ENCODE measurements at regions of chr3 and their contacts with region 1.

Region 1: GRCh38 chr3:147191795-147192385 is 214.5 kb downstream of the ZIC4 start:
- DNase-seq: peak; percentile 68
- H3K4me3 ChIP-seq: no peak overlapping the region
- H3K27ac ChIP-seq: no peak overlapping the region
- H3K4me1 ChIP-seq: peaks cover 16% of the 10 kb centered on the region
- H3K27me3 ChIP-seq: no peaks in the 10 kb centered on the region

Region 2: DNA sequence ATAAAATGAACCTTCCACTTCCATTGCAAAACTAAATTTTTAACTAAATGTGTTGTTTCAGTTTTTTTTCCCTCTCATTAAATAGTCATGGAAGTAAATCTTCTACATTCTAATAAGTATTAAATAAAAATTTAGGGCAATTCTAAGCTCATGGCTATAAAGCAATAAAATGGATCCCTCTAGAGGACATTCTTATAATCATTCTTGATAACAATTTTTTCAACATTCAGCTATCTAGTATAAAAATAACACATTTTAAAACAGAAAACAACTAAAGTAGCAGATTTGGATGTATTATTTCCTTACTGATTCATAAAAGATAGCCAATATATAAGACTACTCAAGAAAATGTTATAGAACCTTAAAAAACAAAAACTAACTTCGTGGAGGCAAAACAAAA is 1424.0 kb before region 1 on chr3:
- in situ Hi-C with region 1: no loop called
- DNase-seq: peak; percentile 43
- H3K4me3 ChIP-seq: no peak overlapping the region
- H3K27ac ChIP-seq: no peak overlapping the region
- H3K4me1 ChIP-seq: no peaks in the 10 kb centered on the region
- H3K27me3 ChIP-seq: no peaks in the 10 kb centered on the region

Region 3: DNA sequence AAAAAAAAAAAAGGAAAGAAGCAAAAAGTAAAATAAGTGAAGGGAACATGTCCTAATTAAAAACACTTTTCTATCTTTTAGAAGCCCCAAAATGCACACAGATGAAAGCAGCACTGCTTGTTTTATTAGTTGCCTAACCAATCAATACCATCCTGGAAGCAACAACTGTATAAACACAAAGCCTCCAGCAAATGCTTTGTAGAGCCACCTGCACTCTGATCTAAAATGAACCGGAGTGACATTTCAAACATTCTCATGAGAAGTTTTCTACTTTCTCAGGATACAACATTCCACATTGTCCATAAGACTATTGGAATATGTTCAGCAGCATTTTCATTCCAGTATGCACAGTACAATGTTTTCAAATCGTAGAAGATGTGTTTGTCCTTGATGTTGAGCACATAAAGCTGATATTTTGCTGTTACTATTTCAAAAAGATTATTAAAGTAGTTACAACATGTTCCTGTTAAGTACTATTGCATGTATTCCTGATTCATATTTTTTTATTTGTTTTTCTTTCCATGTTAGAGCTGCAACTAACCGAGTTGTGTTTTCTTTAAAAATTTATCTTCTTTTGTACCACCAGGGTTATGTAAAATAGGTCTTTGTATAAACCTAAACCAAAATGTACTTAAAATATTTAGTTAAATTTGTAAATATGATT is 536.4 kb before region 1 on chr3:
- in situ Hi-C with region 1: loop called (anchors 10 kb)
- DNase-seq: no peak
- H3K4me3 ChIP-seq: no peak overlapping the region
- H3K27ac ChIP-seq: no peak overlapping the region
- H3K4me1 ChIP-seq: no peaks in the 10 kb centered on the region
- H3K27me3 ChIP-seq: no peaks in the 10 kb centered on the region

Region 4: DNA sequence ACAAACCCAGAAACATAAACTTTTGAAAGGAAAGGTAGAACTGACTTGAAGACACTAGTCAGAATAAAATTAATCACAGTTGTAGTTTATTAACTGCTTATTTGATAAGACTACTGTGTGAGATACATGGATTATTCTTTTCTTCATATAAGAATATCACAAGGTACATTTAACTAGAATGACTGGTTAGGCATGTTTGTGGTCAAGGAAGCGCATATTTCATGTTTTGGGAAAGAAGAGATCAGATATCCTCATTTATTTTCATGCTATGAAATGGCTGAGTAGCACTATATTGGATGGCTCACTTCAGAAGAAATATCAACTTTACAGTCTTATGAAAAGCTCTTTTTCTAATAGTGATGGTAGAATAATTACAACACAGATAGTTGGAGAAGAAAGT is 364.5 kb before region 1 on chr3:
- in situ Hi-C with region 1: loop called (anchors 10 kb)
- DNase-seq: no peak
- H3K4me3 ChIP-seq: no peak overlapping the region
- H3K27ac ChIP-seq: no peak overlapping the region
- H3K4me1 ChIP-seq: peaks cover 11% of the 10 kb centered on the region; the same call in 1 of the 2 replicates
- H3K27me3 ChIP-seq: no peaks in the 10 kb centered on the region

Region 5: GRCh38 chr3:147730284-147730683 is 538.4 kb after region 1 on chr3:
- in situ Hi-C with region 1: no loop called
- DNase-seq: no peak
- H3K4me3 ChIP-seq: no peak overlapping the region
- H3K27ac ChIP-seq: no peak overlapping the region
- H3K4me1 ChIP-seq: no peaks in the 10 kb centered on the region
- H3K27me3 ChIP-seq: no peaks in the 10 kb centered on the region